WTC11 (cell line): ENCODE measurements at regions of chr1 and their contacts with region 1.

Region 1: DNA sequence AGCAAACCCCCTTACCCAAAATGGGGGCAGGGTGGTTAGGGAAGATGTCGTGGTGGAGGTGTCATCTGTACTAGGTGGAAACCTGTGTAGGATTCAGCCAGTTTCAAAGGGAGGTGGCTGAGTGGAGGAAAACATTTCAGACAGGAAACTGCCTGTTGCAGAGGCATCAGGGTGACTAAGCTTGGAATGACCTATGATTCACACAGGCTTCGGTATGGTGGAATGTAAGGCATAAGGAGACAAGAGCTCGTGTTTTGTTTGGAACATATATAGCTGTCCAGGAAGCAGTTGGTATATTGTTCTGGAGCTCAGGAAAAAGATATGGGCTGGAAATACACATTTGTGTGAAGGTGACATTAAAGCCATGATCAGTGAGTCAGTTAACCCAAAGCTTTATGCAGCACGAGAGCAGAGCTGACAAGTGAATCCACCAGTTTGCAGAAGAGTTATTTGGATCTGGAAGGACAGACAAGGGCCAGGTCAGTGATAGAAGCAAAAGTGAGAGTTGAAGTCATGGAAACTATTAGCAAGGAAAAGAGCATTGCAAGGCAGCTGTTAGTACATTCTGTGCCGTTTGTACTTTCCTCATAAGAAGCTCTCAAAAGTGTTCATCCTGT is 12.2 kb downstream of the UTP25 start:
- DNase-seq: no peak
- ATAC-seq: no peak
- H3K4me3 Mint-ChIP-seq: no peak overlapping the region
- H3K27ac Mint-ChIP-seq: no peak overlapping the region
- H3K4me1 Mint-ChIP-seq: no peaks in the 10 kb centered on the region
- H3K27me3 Mint-ChIP-seq: no peaks in the 10 kb centered on the region
- CTCF ChIP-seq: no peak

Region 2: GRCh38 chr1:210099921-210100320 is 259.9 kb after region 1 on chr1:
- CTCF ChIA-PET with region 1: no interaction called
- POLR2A ChIA-PET with region 1: interaction called, 11 read pairs
- DNase-seq: no peak
- ATAC-seq: no peak
- H3K4me3 Mint-ChIP-seq: no peak overlapping the region
- H3K27ac Mint-ChIP-seq: no peak overlapping the region
- H3K4me1 Mint-ChIP-seq: no peaks in the 10 kb centered on the region
- H3K27me3 Mint-ChIP-seq: no peaks in the 10 kb centered on the region
- CTCF ChIP-seq: no peak

Region 3: DNA sequence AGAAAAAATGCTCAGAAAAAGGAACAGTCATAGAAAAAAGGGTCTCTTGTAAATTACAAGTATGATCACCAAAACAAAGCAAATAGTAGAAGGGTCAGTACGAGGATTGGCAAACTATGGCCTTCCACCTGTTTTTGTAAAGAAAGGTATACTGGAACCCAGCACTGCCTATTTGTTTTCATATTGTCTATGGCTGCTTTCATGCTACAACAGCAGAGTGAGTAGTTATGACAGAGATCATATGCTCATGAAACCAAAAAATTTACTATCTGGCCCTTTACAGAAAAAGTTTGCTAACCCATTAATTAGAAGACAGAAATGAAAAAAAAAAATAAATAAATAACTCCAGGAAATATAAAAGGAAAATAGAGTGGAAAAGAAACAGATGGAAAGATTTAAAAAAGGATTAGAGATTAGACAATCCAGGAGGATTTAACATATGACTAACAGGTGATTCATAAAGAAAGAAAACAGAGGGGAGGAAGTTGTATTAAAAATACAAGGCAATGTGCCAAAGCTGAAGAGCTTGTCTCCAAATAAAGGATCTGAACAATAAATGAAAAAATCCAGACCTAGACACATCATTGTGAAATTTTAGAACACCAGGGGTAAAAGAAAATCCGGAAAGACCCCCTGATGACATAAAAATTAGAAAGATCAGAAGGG is 284.1 kb after region 1 on chr1:
- CTCF ChIA-PET with region 1: no interaction called
- POLR2A ChIA-PET with region 1: no interaction called
- DNase-seq: no peak
- ATAC-seq: no peak
- H3K4me3 Mint-ChIP-seq: no peak overlapping the region
- H3K27ac Mint-ChIP-seq: no peak overlapping the region
- H3K4me1 Mint-ChIP-seq: peaks cover 11% of the 10 kb centered on the region
- H3K27me3 Mint-ChIP-seq: no peaks in the 10 kb centered on the region
- CTCF ChIP-seq: no peak